Dorsolateral prefrontal cortex (tissue), 120 donors: ENCODE measurements at regions of chr17 and their contacts with region 1.

Region 1: DNA sequence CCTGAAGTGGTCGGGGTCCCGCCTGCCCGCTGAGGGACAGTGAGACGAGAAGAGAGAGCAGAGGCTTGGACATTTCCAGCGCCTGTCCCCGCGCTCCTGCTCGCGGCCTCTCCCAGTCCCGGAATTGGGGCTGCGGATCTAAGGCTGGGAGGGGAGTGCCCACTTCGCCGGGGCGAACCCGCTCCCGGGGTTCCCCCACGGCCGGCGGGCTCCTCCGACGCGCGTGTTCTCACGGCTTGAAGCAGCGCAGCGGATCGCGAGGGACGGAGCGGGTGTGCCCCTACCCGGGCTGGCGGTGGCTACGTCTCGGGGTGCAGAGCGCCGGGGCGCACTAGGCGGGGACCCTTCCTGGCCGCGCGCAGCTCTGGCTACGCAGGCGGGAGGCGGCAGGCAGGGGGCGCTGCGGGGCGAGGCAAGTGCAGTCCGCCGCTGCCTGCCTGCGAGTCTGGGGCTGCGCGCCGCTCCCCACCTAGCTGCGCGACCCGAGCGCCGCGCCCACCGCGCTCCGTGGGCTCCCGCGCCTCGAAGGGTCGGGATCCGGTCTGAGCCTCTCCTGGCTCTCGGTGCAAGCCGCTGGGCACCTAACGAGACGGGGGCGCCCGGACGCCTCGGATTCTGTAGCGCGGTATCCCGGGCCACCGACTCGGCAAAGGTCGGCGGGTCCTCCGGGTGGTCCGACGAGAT is 1.2 kb downstream of the NGFR start:
- DNase-seq: peak; percentile 49 to 85 (median 69)
- H3K4me3 ChIP-seq: peak overlapping the region; percentile 29 to 77 (median 61)
- H3K27ac ChIP-seq: no peak overlapping the region
- H3K27me3 ChIP-seq: peaks cover 0 to 66% (median 49%) of the 10 kb centered on the region in 45 donors
- CTCF ChIP-seq: peak; percentile 28 to 95 (median 84)

Region 2: GRCh38 chr17:49191917-49192741 is 304.2 kb before region 1 on chr17:
- intact Hi-C with region 1: loop called in 1 of 2 experiments (anchors 5 kb)
- DNase-seq: peak; percentile 87 to 96 (median 92)
- H3K4me3 ChIP-seq: peak overlapping the region; percentile 60 to 99 (median 82)
- H3K27ac ChIP-seq: peak overlapping the region; percentile 94 to 100 (median 99)
- H3K27me3 ChIP-seq: no peaks in the 10 kb centered on the region
- CTCF ChIP-seq: peak in 54 of 56 donors; percentile 21 to 70 (median 50)

Region 3: DNA sequence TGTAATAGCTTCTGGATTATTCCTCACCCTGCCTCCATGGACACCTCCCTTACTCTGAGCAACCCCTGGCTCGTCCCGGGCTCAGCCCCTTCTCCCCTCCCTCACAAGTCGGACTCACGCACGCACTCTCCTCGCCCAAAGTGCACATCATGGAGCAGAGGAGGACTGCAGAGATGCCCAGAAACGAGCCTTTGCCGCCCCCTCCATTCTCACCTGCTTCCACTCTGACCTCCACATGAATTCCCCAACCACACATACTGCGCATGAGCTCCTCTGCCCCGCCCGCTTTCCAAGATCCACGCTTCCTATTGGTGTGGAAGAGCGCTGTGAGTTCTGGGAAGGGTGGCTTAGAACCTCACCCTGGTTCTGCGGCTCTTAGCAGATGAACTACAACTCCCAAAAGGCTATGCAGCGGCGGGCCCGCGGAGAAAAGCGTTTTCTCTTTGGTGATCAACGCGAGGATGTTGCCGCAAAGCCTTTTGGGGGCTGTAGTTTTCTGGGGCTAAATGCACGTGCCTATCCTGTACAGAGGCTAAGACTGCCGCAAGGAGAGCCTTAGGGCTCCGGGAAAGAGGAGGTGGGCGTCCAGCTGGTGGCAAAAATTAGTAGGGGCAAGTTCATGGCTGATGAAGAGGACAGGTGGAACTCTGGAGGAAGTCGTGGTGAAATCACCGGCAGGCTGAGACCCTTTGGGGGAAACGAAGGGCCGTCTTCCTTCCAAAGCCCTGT is 81.5 kb before region 1 on chr17 and contains the start of gene PHB1:
- intact Hi-C with region 1: loop called in 1 of 2 experiments (anchors 5 kb)
- DNase-seq: peak; percentile 92 to 99 (median 97)
- H3K4me3 ChIP-seq: peak within 1 kb of the TSS; percentile 70 to 100 (median 92)
- H3K27ac ChIP-seq: peak within 1 kb of the TSS in 16 of 59 donors; percentile 12 to 78 (median 40)
- H3K27me3 ChIP-seq: no peaks in the 10 kb centered on the region
- CTCF ChIP-seq: peak in 36 of 56 donors; percentile 5 to 60 (median 34)
- total RNA-seq, gene PHB1: 64.2 to 118 (median 89.1) TPM

Region 4: DNA sequence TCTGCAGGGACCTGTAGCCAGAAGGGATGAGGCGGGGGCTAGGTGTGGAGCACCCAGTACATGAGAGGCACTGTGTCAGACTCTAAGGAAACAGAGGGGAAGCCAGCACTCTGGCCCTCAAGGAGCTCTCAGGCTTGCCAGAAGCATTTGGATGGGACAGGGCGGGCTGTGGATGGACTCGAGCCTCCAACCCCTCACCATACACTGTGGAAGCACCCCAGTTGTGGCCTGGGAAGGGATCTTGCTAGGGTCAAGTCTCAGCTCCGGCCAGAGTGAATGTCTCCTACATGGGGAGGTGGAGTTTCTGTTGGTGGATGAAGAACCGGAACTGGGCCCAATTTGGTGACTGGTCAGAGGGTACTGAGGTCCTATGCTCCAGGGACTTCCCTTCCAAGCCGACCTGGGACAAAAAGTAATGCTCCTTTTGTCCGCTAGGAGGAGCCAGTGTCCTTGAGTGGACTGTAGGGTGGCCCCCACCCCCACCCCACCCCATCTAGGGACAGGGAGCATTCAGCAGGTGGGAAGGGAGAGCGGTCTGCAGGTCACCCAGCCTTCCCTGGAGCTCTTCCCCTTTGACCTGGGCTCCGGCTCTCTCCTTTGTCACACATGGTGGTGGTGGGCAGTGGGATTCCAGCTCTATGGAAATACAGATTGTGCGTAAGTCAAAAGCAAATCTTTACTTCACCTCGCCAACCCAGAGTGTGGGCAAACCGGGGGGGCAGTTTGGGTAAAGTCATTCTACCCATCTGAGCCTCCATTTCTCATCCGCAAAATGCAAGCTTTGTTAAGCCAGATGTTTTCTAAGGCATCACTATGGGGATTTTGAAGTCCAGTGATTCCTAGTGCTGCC is 61.3 kb before region 1 on chr17:
- intact Hi-C with region 1: loop called in 1 of 2 experiments (anchors 10 kb)
- DNase-seq: peak in 2 of 10 donors; percentile 54 to 60
- H3K4me3 ChIP-seq: no peak overlapping the region
- H3K27ac ChIP-seq: no peak overlapping the region
- H3K27me3 ChIP-seq: peaks cover 0 to 27% (median 9%) of the 10 kb centered on the region in 45 donors
- CTCF ChIP-seq: peak in 55 of 56 donors; percentile 54 to 89 (median 77)

Region 5: GRCh38 chr17:49456183-49456965 is 40.0 kb before region 1 on chr17:
- intact Hi-C with region 1: loop called in 1 of 2 experiments (anchors 5 kb)
- DNase-seq: no peak
- H3K4me3 ChIP-seq: no peak overlapping the region
- H3K27ac ChIP-seq: no peak overlapping the region
- H3K27me3 ChIP-seq: peaks cover 0 to 14% (median 0%) of the 10 kb centered on the region in 45 donors
- CTCF ChIP-seq: no peak

Region 6: DNA sequence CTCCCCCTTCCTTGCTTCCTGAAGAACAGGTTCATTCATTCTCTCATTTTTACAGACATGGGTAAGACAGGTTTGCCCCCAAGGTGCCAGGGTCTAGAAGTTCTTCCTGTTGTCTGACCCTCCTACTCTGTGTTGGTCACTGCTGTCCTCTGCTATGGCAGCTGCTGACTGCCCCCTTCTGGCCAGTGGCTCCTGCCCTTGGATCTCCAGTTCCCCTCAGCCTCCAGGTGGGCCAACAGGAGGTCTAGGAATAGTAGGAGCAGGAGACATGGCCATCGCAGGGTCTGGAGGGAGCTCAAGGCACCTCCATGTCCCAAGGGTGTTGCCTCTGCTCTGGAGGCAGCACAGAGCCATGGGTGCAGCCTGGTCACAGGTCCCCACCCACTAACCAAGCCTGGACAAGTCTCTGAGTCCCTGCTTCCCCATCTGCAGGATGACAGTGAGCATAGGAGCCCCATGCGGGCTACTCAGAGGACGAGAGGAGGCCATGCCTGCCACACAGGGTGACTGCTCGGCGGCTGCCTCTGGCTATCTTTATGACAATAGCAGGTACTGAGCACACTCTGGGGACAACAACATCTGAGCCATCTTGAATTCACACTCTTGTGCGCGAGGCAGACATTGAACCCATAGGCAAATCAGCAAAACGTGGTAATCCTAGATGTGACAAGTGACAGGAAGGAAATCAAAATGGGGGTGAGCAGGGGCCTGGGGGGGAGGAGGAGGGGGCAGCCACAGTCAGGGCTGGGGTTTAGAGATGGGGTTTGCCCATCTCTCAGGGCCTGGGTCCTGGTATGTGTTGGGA is 52.4 kb after region 1 on chr17:
- intact Hi-C with region 1: loop called in 1 of 2 experiments (anchors 2 kb)
- DNase-seq: no peak
- H3K4me3 ChIP-seq: no peak overlapping the region
- H3K27ac ChIP-seq: no peak overlapping the region
- H3K27me3 ChIP-seq: peaks cover 0 to 15% (median 0%) of the 10 kb centered on the region in 45 donors
- CTCF ChIP-seq: peak in 52 of 56 donors; percentile 15 to 75 (median 47)

Region 7: DNA sequence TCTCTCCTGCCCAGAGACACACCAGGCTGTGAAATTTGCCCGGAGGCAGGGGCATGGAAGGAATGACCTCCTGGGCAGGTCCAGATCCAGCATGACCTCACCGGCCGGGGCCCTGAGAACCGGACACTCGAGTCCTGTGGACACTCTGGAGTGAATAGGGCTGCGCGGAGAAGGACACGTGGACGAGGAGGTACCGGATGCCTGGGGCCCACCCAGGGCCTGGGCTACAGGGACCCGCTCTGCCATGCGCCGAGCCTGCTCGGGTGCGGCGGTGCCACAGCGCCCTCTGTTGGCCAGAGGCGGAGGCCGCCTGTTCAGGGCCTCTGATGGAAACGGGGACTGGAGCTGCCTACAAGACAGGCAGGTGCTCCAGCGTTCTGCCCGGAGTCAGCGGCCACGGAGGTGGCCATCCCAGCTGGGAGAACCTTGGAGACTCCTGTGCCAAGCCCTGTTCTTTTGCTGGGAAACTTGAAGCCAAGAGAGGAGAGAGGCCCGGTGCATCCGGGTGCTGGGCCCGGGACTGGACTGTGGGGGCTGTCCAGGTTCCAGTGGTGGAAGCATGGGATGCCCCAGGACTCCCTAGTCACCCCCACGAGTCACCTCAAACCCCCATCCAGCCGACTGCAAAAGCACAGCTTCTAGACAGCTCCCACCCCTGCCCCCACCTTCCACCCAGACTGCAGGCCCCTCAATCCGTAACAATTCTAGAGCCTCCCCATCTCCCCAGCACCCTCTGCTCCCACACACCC is 60.1 kb after region 1 on chr17:
- intact Hi-C with region 1: loop called (anchors 1 to 5 kb)
- DNase-seq: peak in 9 of 10 donors; percentile 65 to 89 (median 78)
- H3K4me3 ChIP-seq: peak overlapping the region in 22 of 59 donors; percentile 2 to 47 (median 26)
- H3K27ac ChIP-seq: peak overlapping the region in 1 of 59 donors; percentile 23
- H3K27me3 ChIP-seq: peaks cover 0 to 4% (median 0%) of the 10 kb centered on the region in 45 donors
- CTCF ChIP-seq: peak; percentile 90 to 100 (median 98)